Posterior cingulate gyrus (tissue), 11 donors: ENCODE measurements at regions of chr11 and their contacts with region 1.

Region 1: GRCh38 chr11:59135648-59136461 is 6.8 kb upstream of the FAM111A start:
- DNase-seq: peak; percentile 50 to 97 (median 84)

Region 2: GRCh38 chr11:59053387-59053786 is 82.5 kb before region 1 on chr11:
- intact Hi-C with region 1: loop called (anchors 5 kb)
- DNase-seq: peak in 9 of 10 donors; percentile 46 to 94 (median 75)

Region 3: GRCh38 chr11:59097113-59097708 is 38.6 kb before region 1 on chr11:
- intact Hi-C with region 1: loop called (anchors 1 kb)
- DNase-seq: peak in 7 of 10 donors; percentile 32 to 88 (median 56)

Region 4: DNA sequence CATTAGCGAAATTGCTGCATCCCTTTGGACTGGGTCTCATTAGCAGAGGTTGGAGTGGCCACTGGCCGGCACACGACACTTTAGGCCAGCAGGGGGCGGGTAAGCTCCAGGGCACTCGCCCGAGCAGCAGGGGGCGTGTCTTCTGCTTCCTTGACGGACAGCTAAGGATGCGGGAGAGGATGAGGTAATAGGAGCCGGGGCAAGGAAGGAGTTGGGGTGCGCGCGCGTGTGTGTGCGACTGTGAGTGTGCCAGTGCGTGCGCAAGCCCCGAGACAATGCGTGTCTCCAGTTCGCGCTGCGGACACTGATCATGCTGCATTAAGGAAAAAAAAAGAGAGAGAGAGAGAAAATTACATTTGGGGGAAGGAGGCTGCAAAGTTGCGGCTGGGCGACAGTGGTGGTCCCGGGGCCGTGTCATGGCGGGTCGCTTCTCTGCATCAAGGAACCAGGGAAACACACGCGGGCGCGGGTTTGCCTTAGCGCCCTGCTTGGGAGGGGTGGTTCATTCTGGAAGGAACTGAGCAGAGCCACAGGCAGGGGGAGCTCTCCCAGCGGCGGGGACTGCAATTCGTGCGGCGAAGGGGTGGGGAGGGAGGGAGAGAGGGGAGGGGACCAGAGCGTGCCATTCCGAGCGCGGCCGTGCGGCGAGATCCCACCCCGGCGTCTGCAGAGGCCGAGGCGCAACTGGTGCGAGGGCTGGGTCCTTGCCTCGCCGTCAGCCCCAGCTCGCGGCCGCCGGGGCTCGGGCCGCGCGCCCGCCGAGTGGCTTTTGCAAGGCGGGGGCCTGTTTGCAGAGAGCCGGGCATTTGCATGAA is 35.9 kb after region 1 on chr11 and contains the start of gene DTX4:
- intact Hi-C with region 1: no loop called
- DNase-seq: peak; percentile 87 to 99 (median 94)

Region 5: DNA sequence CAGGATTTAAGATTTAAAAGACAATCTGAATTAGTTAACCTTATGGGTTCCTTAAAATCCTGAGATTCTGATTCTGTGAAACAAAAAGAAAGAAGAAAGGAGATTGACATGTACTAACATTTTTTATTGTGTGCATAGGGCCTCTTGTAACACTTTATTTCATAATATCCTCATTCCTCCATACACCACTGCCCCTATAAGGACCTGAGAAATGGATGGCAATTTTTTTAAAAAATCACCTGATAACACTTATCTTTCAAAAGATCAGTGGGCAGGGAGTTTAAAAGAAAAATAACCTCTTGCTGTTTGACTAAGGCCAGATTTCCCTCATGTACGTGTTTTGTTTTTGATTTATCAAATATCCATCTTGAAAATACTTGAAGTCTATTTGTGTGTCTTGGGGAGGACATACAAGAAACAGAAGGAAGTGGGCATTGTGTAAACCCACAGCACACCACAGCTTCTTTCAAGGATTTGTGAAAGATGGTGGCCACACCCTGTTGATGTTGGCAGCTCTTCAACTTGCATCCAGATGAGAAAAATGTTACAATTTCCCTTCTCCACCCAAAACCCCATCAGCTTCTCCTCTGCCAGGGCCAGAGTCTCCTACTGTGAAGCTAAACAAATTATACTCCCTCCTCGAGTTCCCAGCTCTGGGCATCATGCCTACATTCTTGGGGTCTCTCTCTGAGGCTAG is 111.8 kb after region 1 on chr11:
- intact Hi-C with region 1: no loop called
- DNase-seq: no peak